ENCODE measurements at regions of chr15 and their contacts with region 1.

Region 1: GRCh38 chr15:85296615-85297402 is 83.6 kb upstream of the AKAP13 start:
- DNase-seq: peak; percentile 74
- H3K4me3 ChIP-seq: peak overlapping the region in 1 of 3 experiments; percentile 11
- H3K27ac ChIP-seq: no peak overlapping the region
- H3K4me1 ChIP-seq: peaks cover 7% of the 10 kb centered on the region
- H3K27me3 ChIP-seq: no peaks in the 10 kb centered on the region
- CTCF ChIP-seq: peak; percentile 80 to 81

Region 2: DNA sequence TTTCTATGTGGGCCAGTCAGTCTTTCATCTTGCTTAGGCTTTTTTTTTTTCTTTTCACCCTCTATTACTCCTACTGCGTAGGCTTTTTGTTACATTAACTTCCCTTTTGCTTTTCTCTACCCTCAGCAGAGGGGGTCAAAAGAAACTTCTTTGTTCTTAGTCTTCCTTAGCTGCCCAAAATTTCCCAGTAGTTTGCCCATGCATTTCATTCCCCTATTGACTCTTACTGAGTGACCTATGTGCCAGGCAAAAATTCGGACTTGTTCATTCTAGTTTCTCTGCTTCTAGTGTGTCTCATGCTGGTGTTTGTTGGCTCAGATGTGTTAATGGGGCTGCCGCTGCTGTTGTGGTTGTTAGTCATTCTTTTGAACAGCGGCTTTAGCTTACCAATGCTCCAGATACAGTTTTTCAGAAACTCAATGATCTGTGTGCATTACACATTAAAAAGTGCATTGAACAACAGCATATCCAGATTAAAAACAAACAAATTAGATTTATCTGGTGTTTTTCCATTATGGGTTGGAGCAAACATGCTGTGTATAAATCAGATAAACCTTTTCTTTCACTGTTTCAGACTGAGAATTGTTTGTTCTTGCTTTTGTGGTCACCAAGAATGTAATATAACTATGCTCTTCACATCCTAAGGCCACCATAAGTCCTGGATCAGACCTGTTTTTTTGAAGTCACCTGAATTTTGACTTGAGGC is 272.1 kb before region 1 on chr15:
- CTCF ChIA-PET with region 1: interaction called, 15 read pairs
- dilution Hi-C with region 1: no loop called
- in situ Hi-C with region 1: no loop called
- intact Hi-C with region 1: no loop called
- DNase-seq: peak; percentile 91
- H3K4me3 ChIP-seq: no peak overlapping the region
- H3K27ac ChIP-seq: no peak overlapping the region
- H3K4me1 ChIP-seq: peaks cover 16% of the 10 kb centered on the region
- H3K27me3 ChIP-seq: no peaks in the 10 kb centered on the region
- CTCF ChIP-seq: no peak

Region 3: GRCh38 chr15:85401108-85401774 is 104.4 kb after region 1 on chr15:
- CTCF ChIA-PET with region 1: no interaction called
- dilution Hi-C with region 1: no loop called
- in situ Hi-C with region 1: no loop called
- intact Hi-C with region 1: no loop called
- DNase-seq: no peak
- H3K4me3 ChIP-seq: no peak overlapping the region
- H3K27ac ChIP-seq: no peak overlapping the region
- H3K4me1 ChIP-seq: peaks cover 26% of the 10 kb centered on the region
- H3K27me3 ChIP-seq: no peaks in the 10 kb centered on the region
- CTCF ChIP-seq: no peak

Region 4: GRCh38 chr15:85412956-85413854 is 116.4 kb after region 1 on chr15:
- CTCF ChIA-PET with region 1: interaction called, 21 read pairs
- dilution Hi-C with region 1: no loop called
- in situ Hi-C with region 1: no loop called
- intact Hi-C with region 1: loop called (anchors 1 kb)
- DNase-seq: peak; percentile 98
- H3K4me3 ChIP-seq: no peak overlapping the region
- H3K27ac ChIP-seq: peak overlapping the region; percentile 98
- H3K4me1 ChIP-seq: peaks cover 44% of the 10 kb centered on the region
- H3K27me3 ChIP-seq: no peaks in the 10 kb centered on the region
- CTCF ChIP-seq: peak in 1 of 2 donors; percentile 28

Region 5: GRCh38 chr15:85504749-85505676 is 208.2 kb after region 1 on chr15:
- CTCF ChIA-PET with region 1: no interaction called
- dilution Hi-C with region 1: no loop called
- in situ Hi-C with region 1: no loop called
- intact Hi-C with region 1: loop called (anchors 1 kb)
- DNase-seq: peak; percentile 52
- H3K4me3 ChIP-seq: no peak overlapping the region
- H3K27ac ChIP-seq: no peak overlapping the region
- H3K4me1 ChIP-seq: no peaks in the 10 kb centered on the region
- H3K27me3 ChIP-seq: no peaks in the 10 kb centered on the region
- CTCF ChIP-seq: peak; percentile 52 to 59

Region 6: DNA sequence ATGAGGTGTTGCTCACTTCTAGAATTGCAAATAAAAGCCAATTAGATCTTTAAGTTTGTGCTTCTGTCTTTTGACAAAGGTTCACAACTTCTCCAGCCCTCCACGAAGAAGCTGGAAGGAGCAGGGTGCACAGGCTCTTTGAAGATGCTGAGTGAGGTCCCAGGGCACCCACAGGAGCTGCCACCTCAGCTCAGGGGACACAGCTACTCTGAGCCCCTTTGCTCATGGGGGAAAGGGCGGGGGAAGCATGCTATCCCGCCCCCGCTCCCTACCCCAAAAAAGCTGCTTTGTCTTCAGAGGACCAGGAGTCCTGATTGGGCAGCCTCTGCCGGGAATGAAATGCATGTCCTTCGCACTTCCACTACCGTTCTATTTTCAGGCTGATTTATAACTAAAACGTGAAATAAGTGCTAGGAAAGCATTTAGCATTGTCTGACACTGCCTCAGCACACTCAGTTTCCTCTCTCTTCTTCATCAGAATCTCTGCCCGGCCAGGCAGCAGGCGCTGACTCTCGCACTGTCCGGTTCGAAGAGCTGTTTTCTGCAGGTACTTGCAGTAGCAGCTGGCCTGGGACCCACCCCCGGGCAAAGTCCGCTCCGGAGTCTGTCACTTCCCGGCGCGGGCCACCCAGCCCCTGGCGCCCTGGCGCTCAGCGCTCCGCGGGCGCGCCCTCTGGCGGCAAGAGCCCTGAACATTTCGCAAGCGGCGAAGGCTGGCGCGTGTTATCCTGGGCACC is 543.4 kb after region 1 on chr15:
- CTCF ChIA-PET with region 1: no interaction called
- dilution Hi-C with region 1: no loop called
- in situ Hi-C with region 1: loop called in 1 of 2 experiments (anchors 25 kb)
- intact Hi-C with region 1: loop called (anchors 1 kb)
- DNase-seq: peak; percentile 63
- H3K4me3 ChIP-seq: peak overlapping the region in 2 of 3 experiments; percentile 3 to 35
- H3K27ac ChIP-seq: no peak overlapping the region
- H3K4me1 ChIP-seq: peaks cover 4% of the 10 kb centered on the region
- H3K27me3 ChIP-seq: no peaks in the 10 kb centered on the region
- CTCF ChIP-seq: peak; percentile 55 to 97

Measured in mammary epithelial cell (primary cell).